ENCODE measurements at regions of chr18 and their contacts with region 1.

Region 1: DNA sequence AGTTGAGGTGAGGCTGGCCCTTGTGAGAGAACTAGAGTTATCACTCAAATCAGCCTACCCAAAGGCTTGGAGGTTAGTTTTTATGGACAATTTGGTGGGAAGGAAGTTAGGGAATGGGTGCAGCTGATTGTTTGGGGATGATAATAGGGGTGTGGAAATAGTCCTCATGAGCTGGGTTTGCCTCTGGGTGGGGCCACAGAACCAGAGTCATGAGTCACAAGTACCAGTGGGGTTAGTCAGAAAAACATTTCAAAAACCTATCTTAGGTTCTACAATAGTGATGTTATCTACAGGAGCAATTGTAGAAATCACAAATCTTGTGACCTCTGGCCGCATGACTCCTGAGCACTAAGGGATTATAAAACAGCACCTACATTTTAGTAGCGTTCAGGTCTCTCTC is 630.1 kb upstream of the PIK3C3 start:
- DNase-seq: peak; percentile 90
- H3K4me3 ChIP-seq: no peak overlapping the region
- H3K27ac ChIP-seq: peak overlapping the region; percentile 85
- H3K4me1 ChIP-seq: peaks cover 38% of the 10 kb centered on the region
- H3K27me3 ChIP-seq: no peaks in the 10 kb centered on the region
- CTCF ChIP-seq: no peak

Region 2: DNA sequence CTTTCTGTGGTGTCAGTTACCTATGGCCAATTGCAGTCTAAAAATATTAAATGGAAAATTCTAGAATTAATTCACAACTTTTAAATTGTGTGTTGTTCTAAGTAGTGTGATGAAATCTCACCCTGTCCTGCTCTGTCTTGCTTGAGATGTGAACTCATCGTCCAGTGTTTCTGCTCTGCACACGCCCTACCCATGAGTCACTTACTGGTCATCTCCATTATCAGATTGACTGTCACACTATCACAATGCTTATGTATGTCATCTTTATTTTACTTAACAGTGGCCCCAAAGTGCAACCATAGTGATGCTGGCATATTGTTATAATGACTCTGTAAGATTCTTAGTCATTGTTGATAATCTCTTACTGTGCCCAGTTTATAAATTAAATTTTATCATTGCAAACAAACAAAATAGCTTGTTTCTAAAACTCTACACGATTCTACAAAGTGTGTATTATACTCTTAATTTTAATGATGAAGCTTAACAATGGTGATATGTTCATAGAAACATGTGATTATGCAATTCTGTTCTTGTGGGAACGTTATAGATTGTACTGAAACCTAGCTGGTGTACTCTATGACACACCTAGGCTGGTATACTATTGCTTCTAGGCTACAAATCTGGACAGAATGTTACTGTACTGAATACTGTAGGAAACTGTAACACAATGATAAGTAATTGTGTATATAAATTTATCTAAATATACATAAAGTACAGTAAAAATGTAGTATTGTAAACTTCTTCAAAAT is 456.6 kb before region 1 on chr18:
- CTCF ChIA-PET with region 1: no interaction called
- dilution Hi-C with region 1: no loop called
- in situ Hi-C with region 1: no loop called
- intact Hi-C with region 1: loop called (anchors 5 kb)
- DNase-seq: peak; percentile 99
- H3K4me3 ChIP-seq: no peak overlapping the region
- H3K27ac ChIP-seq: peak overlapping the region; percentile 100
- H3K4me1 ChIP-seq: peaks cover 27% of the 10 kb centered on the region
- H3K27me3 ChIP-seq: no peaks in the 10 kb centered on the region
- CTCF ChIP-seq: no peak

Region 3: GRCh38 chr18:40877096-40877495 is 447.8 kb before region 1 on chr18:
- CTCF ChIA-PET with region 1: no interaction called
- dilution Hi-C with region 1: no loop called
- in situ Hi-C with region 1: no loop called
- intact Hi-C with region 1: loop called (anchors 2 kb)
- DNase-seq: peak; percentile 86
- H3K4me3 ChIP-seq: no peak overlapping the region
- H3K27ac ChIP-seq: peak overlapping the region; percentile 83
- H3K4me1 ChIP-seq: peaks cover 54% of the 10 kb centered on the region
- H3K27me3 ChIP-seq: no peaks in the 10 kb centered on the region
- CTCF ChIP-seq: no peak

Region 4: GRCh38 chr18:41144441-41144840 is 180.5 kb before region 1 on chr18:
- CTCF ChIA-PET with region 1: interaction called, 4 read pairs
- dilution Hi-C with region 1: no loop called
- in situ Hi-C with region 1: no loop called
- intact Hi-C with region 1: loop called (anchors 1 kb)
- DNase-seq: peak; percentile 75
- H3K4me3 ChIP-seq: no peak overlapping the region
- H3K27ac ChIP-seq: peak overlapping the region; percentile 79
- H3K4me1 ChIP-seq: peaks cover 26% of the 10 kb centered on the region
- H3K27me3 ChIP-seq: no peaks in the 10 kb centered on the region
- CTCF ChIP-seq: no peak

Region 5: GRCh38 chr18:41231681-41232080 is 93.3 kb before region 1 on chr18:
- CTCF ChIA-PET with region 1: no interaction called
- dilution Hi-C with region 1: loop called (anchors 5 kb)
- in situ Hi-C with region 1: no loop called
- intact Hi-C with region 1: no loop called
- DNase-seq: no peak
- H3K4me3 ChIP-seq: no peak overlapping the region
- H3K27ac ChIP-seq: no peak overlapping the region
- H3K4me1 ChIP-seq: peaks cover 4% of the 10 kb centered on the region
- H3K27me3 ChIP-seq: no peaks in the 10 kb centered on the region
- CTCF ChIP-seq: no peak